ENCODE measurements at regions of chr4 and their contacts with region 1.

Region 1: DNA sequence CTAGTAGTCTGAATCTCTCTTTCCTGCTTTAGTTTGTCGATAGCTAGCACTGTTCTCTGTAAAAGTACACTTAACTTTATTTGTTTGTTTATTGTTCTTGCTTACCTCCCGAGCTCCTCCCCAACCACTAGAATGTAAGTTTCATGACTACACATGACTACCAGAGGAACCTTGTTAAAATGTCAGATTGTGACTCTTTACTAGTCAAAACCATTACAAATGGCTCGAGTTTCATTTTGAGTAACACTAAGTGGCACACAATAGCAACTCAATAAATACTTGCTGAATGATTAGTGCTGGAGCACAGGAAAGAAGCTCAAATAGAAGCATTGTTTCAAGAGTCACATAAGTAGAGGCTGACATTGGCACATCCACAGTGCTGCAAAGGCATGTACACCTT is 116.1 kb downstream of the MAPK10 start:
- DNase-seq: no peak
- H3K4me3 ChIP-seq: no peak overlapping the region
- H3K27ac ChIP-seq: no peak overlapping the region
- H3K4me1 ChIP-seq: no peaks in the 10 kb centered on the region
- H3K27me3 ChIP-seq: no peaks in the 10 kb centered on the region
- CTCF ChIP-seq: no peak
- EP300 ChIP-seq: no peak
- POLR2A ChIP-seq: no peak
- RAD21 ChIP-seq: no peak

Region 2: DNA sequence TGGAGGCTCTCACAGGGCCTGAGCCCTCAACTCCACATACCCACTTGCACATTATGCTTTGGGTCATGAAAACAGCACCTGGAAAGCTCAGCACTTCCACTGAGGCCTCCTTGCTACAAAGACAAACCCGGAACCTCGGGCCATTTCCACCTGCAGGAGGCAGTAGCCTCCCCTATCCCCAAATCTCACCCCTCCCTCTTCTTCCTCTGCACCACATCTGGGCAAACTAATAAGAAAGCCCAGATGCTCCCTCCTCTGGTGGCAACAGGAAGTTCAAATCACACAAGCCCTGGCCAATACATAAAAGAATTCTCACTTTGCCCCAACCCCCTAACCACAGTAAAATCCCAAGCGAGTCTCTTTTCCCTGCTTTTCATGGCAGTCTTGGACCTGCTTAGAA is 20.3 kb before region 1 on chr4:
- CTCF ChIA-PET with region 1: interaction called, 11 read pairs
- POLR2A ChIA-PET with region 1: no interaction called
- DNase-seq: peak; percentile 66 to 79
- H3K4me3 ChIP-seq: no peak overlapping the region
- H3K27ac ChIP-seq: no peak overlapping the region
- H3K4me1 ChIP-seq: peaks cover 0 to 3% (median 0%) of the 10 kb centered on the region in 4 experiments; a peak in 2 of 7 replicates
- H3K27me3 ChIP-seq: no peaks in the 10 kb centered on the region
- CTCF ChIP-seq: peak; percentile 69 to 99 (median 90)
- EP300 ChIP-seq: no peak
- POLR2A ChIP-seq: no peak
- RAD21 ChIP-seq: peak; percentile 87 to 91

Region 3: GRCh38 chr4:86508436-86508835 is 264.7 kb after region 1 on chr4:
- CTCF ChIA-PET with region 1: no interaction called
- POLR2A ChIA-PET with region 1: no interaction called
- DNase-seq: no peak
- H3K4me3 ChIP-seq: no peak overlapping the region
- H3K27ac ChIP-seq: no peak overlapping the region
- H3K4me1 ChIP-seq: peaks cover 0 to 4% (median 0%) of the 10 kb centered on the region in 4 experiments; a peak in 1 of 7 replicates
- H3K27me3 ChIP-seq: no peaks in the 10 kb centered on the region
- CTCF ChIP-seq: no peak
- EP300 ChIP-seq: no peak
- POLR2A ChIP-seq: no peak
- RAD21 ChIP-seq: no peak

Measured in H1 (cell line).